Ascending aorta (tissue), 2 donors: ENCODE measurements at regions of chr1 and their contacts with region 1.

Region 1: DNA sequence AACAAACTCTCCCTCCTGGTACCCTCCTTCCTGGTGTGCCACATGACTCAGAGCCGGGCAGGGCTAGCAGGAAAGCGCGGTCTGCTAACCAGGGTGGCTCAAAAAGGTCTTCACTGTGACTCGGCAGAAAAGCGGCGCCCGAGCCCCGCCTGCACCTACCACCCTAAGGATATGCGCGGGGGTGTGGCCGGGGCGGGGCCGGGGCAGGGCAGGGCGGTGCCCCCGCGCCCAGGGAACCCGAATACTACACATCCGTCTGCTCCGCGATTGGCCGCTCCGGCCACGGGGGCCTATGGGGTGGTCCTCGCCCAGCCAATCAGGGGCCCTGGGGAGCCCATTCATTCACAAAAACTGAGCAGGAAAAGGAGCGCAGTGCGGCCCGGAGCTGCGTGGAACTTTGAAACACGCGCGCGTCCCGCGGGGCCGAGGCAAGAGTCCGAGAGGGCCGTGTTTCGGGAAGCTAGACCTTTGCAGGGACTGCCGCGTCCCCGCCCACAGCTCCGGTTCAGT is 1.7 kb downstream of the LRP8 start:
- DNase-seq: peak; percentile 80 to 96
- H3K4me3 ChIP-seq: peak overlapping the region; percentile 72 to 84
- H3K27ac ChIP-seq: peak overlapping the region; percentile 42 to 43
- H3K4me1 ChIP-seq: peaks cover 5 to 10% of the 10 kb centered on the region in 2 donors
- H3K27me3 ChIP-seq: no peaks in the 10 kb centered on the region
- CTCF ChIP-seq: no peak

Region 2: GRCh38 chr1:52552505-52553361 is 773.4 kb before region 1 on chr1 and contains the start of gene TUT4:
- intact Hi-C with region 1: loop called (anchors 10 kb)
- DNase-seq: peak; percentile 12 to 84
- H3K4me3 ChIP-seq: peak within 1 kb of the TSS; percentile 94 to 98
- H3K27ac ChIP-seq: peak within 1 kb of the TSS; percentile 86 to 92
- H3K4me1 ChIP-seq: peaks cover 4 to 5% of the 10 kb centered on the region in 2 donors
- H3K27me3 ChIP-seq: no peaks in the 10 kb centered on the region
- CTCF ChIP-seq: no peak
- total RNA-seq, gene TUT4: 36.2 TPM

Region 3: GRCh38 chr1:53196485-53197270 is 129.5 kb before region 1 on chr1 and contains the start of gene CPT2:
- intact Hi-C with region 1: loop called (anchors 2 kb)
- DNase-seq: peak; percentile 71 to 98
- H3K4me3 ChIP-seq: peak within 1 kb of the TSS; percentile 89 to 100
- H3K27ac ChIP-seq: peak within 1 kb of the TSS; percentile 99 to 100
- H3K4me1 ChIP-seq: peaks cover 0 to 18% of the 10 kb centered on the region in 2 donors
- H3K27me3 ChIP-seq: no peaks in the 10 kb centered on the region
- CTCF ChIP-seq: peak in 1 of 3 experiments; percentile 14
- total RNA-seq, gene CPT2: 24.8 TPM

Region 4: GRCh38 chr1:53238197-53239155 is 87.7 kb before region 1 on chr1 and contains the start of gene MAGOH:
- intact Hi-C with region 1: loop called (anchors 1 kb)
- DNase-seq: peak; percentile 72 to 97
- H3K4me3 ChIP-seq: peak within 1 kb of the TSS; percentile 76 to 91
- H3K27ac ChIP-seq: peak within 1 kb of the TSS; percentile 65 to 71
- H3K4me1 ChIP-seq: peaks cover 5 to 18% of the 10 kb centered on the region in 2 donors
- H3K27me3 ChIP-seq: no peaks in the 10 kb centered on the region
- CTCF ChIP-seq: no peak
- total RNA-seq, gene MAGOH: 10.9 TPM

Region 5: GRCh38 chr1:53292690-53293089 is 33.5 kb before region 1 on chr1:
- intact Hi-C with region 1: loop called (anchors 1 kb)
- DNase-seq: no peak
- H3K4me3 ChIP-seq: no peak overlapping the region
- H3K27ac ChIP-seq: peak overlapping the region; percentile 80 to 82
- H3K4me1 ChIP-seq: peaks cover 29 to 39% of the 10 kb centered on the region in 2 donors
- H3K27me3 ChIP-seq: no peaks in the 10 kb centered on the region
- CTCF ChIP-seq: no peak

Region 6: GRCh38 chr1:53945433-53946251 is 619.5 kb after region 1 on chr1 and contains the start of gene IFT25:
- intact Hi-C with region 1: loop called (anchors 5 kb)
- DNase-seq: peak; percentile 87 to 98
- H3K4me3 ChIP-seq: peak within 1 kb of the TSS; percentile 80 to 96
- H3K27ac ChIP-seq: peak within 1 kb of the TSS; percentile 77 to 98
- H3K4me1 ChIP-seq: peaks cover 9 to 16% of the 10 kb centered on the region in 2 donors
- H3K27me3 ChIP-seq: no peaks in the 10 kb centered on the region
- CTCF ChIP-seq: no peak
- total RNA-seq, gene IFT25: not detected